Thyroid gland (tissue), 4 donors: ENCODE measurements at regions of chr11 and their contacts with region 1.

Region 1: GRCh38 chr11:76680518-76681425 is 10.2 kb upstream of the LRRC32 start:
- DNase-seq: peak; percentile 48 to 57
- H3K4me3 ChIP-seq: no peak overlapping the region
- H3K27ac ChIP-seq: no peak overlapping the region
- H3K4me1 ChIP-seq: peaks cover 2 to 4% of the 10 kb centered on the region in 2 donors
- H3K27me3 ChIP-seq: no peaks in the 10 kb centered on the region
- CTCF ChIP-seq: peak; percentile 47 to 78 (median 60)
- POLR2A ChIP-seq: no peak

Region 2: DNA sequence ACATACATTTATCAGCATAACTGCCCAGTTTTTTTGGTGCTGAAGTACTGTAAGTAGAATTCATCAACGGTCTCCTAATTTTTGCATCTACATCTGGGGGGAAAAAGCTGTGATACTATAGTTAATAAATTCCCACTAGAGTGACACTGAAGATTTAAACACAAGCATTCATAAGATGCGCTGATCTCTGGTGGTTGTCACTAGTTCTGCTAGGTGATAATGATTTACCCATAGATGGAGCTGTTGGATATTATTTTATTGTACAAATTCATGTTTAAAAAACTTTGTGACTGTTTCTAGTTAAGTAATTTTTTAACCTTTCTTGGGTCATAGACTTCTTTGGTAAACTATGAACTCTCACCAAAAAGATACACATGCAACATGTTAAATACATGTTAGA is 129.4 kb before region 1 on chr11:
- intact Hi-C with region 1: loop called (anchors 10 kb)
- DNase-seq: no peak
- H3K4me3 ChIP-seq: no peak overlapping the region
- H3K27ac ChIP-seq: no peak overlapping the region
- H3K4me1 ChIP-seq: no peaks in the 10 kb centered on the region
- H3K27me3 ChIP-seq: no peaks in the 10 kb centered on the region
- CTCF ChIP-seq: peak in 3 of 6 experiments; percentile 9 to 24 (median 9)
- POLR2A ChIP-seq: no peak

Region 3: GRCh38 chr11:76566831-76567230 is 113.9 kb before region 1 on chr11:
- intact Hi-C with region 1: no loop called
- DNase-seq: no peak
- H3K4me3 ChIP-seq: no peak overlapping the region
- H3K27ac ChIP-seq: no peak overlapping the region
- H3K4me1 ChIP-seq: no peaks in the 10 kb centered on the region
- H3K27me3 ChIP-seq: no peaks in the 10 kb centered on the region
- CTCF ChIP-seq: no peak
- POLR2A ChIP-seq: no peak